ENCODE measurements at regions of chr7 and their contacts with region 1.

Region 1: GRCh38 chr7:93799750-93800357 is 90.7 kb downstream of the TFPI2 start:
- DNase-seq: peak; percentile 12
- H3K4me3 ChIP-seq: no peak overlapping the region
- H3K27ac ChIP-seq: no peak overlapping the region
- H3K4me1 ChIP-seq: no peaks in the 10 kb centered on the region
- H3K27me3 ChIP-seq: peaks cover under 1% of the 10 kb centered on the region
- CTCF ChIP-seq: peak; percentile 60 to 64

Region 2: GRCh38 chr7:94080551-94080950 is 280.7 kb after region 1 on chr7:
- CTCF ChIA-PET with region 1: no interaction called
- dilution Hi-C with region 1: no loop called
- in situ Hi-C with region 1: loop called (anchors 5 to 25 kb)
- intact Hi-C with region 1: no loop called
- DNase-seq: no peak
- H3K4me3 ChIP-seq: no peak overlapping the region
- H3K27ac ChIP-seq: no peak overlapping the region
- H3K4me1 ChIP-seq: no peaks in the 10 kb centered on the region
- H3K27me3 ChIP-seq: no peaks in the 10 kb centered on the region
- CTCF ChIP-seq: no peak

Region 3: DNA sequence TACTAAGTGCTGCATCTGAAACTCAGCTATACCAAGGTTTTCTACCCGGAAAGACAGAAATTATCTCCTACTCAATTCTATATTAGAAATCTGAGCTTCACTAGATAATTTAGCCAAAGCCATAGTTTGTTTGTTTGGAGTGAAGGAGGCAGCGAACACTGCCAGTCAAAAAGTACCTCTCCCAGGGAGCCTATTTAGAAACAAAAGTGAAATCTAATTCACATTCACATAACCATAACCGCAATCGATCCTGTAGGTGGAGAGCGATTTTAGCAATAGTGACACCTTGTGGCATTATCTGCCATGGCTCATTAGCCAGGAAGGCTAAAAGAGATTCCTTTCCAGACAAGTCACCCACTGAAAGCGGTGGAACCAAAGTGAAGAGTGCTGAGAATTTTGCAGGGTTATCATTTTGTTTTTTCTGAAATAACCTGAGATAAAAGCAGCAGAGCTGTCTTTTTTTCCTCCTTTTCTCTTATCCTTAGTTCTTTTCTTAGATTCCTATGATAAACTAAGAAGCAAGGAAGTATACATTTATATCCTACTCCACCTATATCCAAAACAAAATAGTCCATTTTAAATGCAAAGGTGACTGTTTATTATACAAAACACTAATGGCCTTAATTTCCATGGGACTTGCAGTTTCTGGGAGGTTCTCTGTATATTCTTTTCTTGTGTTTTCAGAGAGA is 288.0 kb after region 1 on chr7:
- CTCF ChIA-PET with region 1: no interaction called
- dilution Hi-C with region 1: no loop called
- in situ Hi-C with region 1: loop called (anchors 5 to 25 kb)
- intact Hi-C with region 1: loop called (anchors 1 kb)
- DNase-seq: peak; percentile 62
- H3K4me3 ChIP-seq: no peak overlapping the region
- H3K27ac ChIP-seq: no peak overlapping the region
- H3K4me1 ChIP-seq: no peaks in the 10 kb centered on the region
- H3K27me3 ChIP-seq: peaks cover 8% of the 10 kb centered on the region
- CTCF ChIP-seq: peak; percentile 82 to 86